CD14-positive monocyte (primary cell): ENCODE measurements at regions of chr19 and their contacts with region 1.

Region 1: GRCh38 chr19:48255376-48256303 is at the start of gene CARD8:
- DNase-seq: peak; percentile 89 to 93 (median 90)
- H3K4me3 ChIP-seq: peak within 1 kb of the TSS; percentile 52 to 100 (median 93)
- H3K4me3 Mint-ChIP-seq: peak within 1 kb of the TSS; percentile 90 to 95
- H3K27ac ChIP-seq: peak within 1 kb of the TSS; percentile 86 to 99
- H3K27ac Mint-ChIP-seq: peak within 1 kb of the TSS; percentile 99 to 100 (median 100)
- H3K4me1 ChIP-seq: peaks cover 46 to 60% of the 10 kb centered on the region in 2 donors
- H3K4me1 Mint-ChIP-seq: peaks cover 64% of the 10 kb centered on the region
- H3K27me3 ChIP-seq: no peaks in the 10 kb centered on the region
- H3K27me3 Mint-ChIP-seq: peaks cover 0 to 3% (median 0%) of the 10 kb centered on the region in 3 donors
- CTCF ChIP-seq: no peak
- polyA plus RNA-seq, gene CARD8: 76.4 to 122 (median 90.9) TPM

Region 2: GRCh38 chr19:48064509-48064908 is 191.1 kb before region 1 on chr19:
- intact Hi-C with region 1: no loop called
- DNase-seq: no peak
- H3K4me3 ChIP-seq: no peak overlapping the region
- H3K4me3 Mint-ChIP-seq: no peak overlapping the region
- H3K27ac ChIP-seq: no peak overlapping the region
- H3K27ac Mint-ChIP-seq: no peak overlapping the region
- H3K4me1 ChIP-seq: no peaks in the 10 kb centered on the region
- H3K4me1 Mint-ChIP-seq: no peaks in the 10 kb centered on the region
- H3K27me3 ChIP-seq: no peaks in the 10 kb centered on the region
- H3K27me3 Mint-ChIP-seq: peaks cover 13 to 21% (median 19%) of the 10 kb centered on the region in 3 donors
- CTCF ChIP-seq: no peak

Region 3: DNA sequence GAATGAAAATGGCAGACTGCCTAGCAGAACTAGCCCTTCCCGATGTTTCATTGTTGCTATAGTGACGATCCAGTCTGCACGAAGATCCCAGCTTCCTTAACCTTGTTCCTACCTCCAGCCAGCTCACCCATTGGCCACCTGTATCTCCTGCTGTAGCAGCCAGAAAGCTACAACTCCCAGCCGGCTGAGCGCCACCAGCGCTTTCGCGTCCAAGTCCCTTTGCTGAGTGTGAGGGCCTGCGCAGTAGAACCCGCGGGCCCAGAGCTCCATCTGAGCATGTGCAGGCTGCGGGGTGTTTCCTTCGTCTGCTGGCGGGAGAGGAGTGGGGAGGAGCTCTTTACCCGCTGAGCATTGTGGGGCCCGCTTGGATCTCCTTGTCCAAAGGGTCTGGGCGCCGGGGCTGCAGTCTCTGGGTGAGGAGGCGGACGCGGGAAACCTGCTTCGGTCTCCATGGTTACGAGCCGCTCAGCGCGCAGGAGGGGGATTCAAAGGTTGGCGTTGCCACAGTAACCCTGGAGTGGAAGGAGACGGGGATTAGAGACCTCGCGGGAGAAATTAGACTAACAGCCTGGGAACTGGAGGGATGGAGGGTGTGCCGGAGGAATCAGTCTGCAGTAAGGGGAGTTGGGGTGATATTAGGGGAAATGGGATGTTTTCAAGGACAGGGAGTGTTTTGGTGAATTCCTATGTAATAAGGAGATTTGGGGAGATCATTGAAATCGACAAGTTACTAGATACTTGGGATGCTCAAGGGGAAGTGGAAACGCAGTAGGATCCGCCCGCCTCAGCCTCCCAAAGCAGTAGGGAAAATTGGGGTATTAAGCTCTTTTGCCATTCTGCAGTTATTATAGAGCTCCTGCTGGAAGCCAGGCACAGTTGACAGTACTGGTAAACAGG is 51.7 kb before region 1 on chr19:
- intact Hi-C with region 1: loop called in 1 of 2 experiments (anchors 5 kb)
- DNase-seq: peak; percentile 77 to 80 (median 78)
- H3K4me3 ChIP-seq: peak overlapping the region; percentile 60 to 82 (median 63)
- H3K4me3 Mint-ChIP-seq: no peak overlapping the region
- H3K27ac ChIP-seq: peak overlapping the region; percentile 19 to 75
- H3K27ac Mint-ChIP-seq: no peak overlapping the region
- H3K4me1 ChIP-seq: peaks cover 22 to 33% of the 10 kb centered on the region in 2 donors
- H3K4me1 Mint-ChIP-seq: peaks cover 17% of the 10 kb centered on the region
- H3K27me3 ChIP-seq: no peaks in the 10 kb centered on the region
- H3K27me3 Mint-ChIP-seq: peaks cover 0 to 3% (median 2%) of the 10 kb centered on the region in 3 donors
- CTCF ChIP-seq: no peak